BJ (cell line): ENCODE measurements at regions of chr9 and their contacts with region 1.

Region 1: DNA sequence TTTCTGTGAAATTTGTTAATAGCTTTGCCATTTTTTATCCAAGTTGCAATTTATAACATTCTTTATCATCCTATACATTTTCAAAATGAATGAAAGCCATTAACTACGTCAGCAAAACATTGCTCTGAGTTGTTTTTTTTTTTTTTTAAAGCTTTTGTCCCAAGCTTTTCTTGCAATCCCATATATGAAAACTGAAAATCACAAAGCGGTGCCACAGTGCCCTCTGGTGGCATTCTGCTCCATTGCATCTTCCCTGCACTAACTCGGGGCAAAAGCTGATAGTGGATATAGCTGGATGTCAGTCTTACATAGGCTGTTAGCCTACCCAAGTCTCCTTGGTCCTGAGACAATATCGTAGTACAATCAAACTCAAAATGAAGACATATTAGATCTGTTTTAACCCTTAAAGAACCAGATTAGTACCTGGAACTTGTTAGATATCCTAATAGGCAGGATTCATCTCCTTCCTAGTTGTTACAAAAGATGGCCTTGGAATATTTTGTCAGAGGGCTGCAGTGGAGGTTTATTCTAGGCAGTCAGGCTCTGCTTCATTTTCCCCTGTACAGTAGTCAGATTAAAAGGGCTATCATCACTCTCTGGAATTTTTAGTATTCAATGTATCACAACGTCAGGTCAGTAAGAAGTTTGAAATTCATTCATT is 669.9 kb downstream of the PTPRD start:
- DNase-seq: peak; percentile 4
- H3K4me3 ChIP-seq: no peak overlapping the region
- H3K27me3 ChIP-seq: no peaks in the 10 kb centered on the region
- CTCF ChIP-seq: peak; percentile 89

Region 2: DNA sequence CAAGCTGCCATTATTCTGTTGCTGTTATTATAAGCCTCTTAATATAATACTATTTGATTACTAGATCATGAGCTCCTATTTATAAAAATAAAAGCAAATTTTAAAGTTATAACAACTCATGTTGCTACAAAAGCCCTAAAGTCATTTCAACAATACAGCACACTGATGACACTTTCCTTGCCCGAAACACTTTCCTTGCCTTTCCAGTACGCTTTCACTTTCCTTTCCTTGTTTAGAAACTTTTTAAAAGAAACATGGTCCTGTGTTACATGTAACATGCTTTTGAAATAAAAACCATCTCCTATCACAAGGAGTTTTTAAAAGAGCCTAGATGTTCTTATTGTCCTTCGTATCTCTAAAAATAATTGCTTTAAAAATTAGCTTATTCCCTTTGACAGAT is 18.5 kb before region 1 on chr9:
- CTCF ChIA-PET with region 1: interaction called, 10 read pairs
- POLR2A ChIA-PET with region 1: no interaction called
- DNase-seq: no peak
- H3K4me3 ChIP-seq: no peak overlapping the region
- H3K27me3 ChIP-seq: no peaks in the 10 kb centered on the region
- CTCF ChIP-seq: no peak